Left cardiac atrium (tissue), 4 donors: ENCODE measurements at regions of chr6 and their contacts with region 1.

Region 1: DNA sequence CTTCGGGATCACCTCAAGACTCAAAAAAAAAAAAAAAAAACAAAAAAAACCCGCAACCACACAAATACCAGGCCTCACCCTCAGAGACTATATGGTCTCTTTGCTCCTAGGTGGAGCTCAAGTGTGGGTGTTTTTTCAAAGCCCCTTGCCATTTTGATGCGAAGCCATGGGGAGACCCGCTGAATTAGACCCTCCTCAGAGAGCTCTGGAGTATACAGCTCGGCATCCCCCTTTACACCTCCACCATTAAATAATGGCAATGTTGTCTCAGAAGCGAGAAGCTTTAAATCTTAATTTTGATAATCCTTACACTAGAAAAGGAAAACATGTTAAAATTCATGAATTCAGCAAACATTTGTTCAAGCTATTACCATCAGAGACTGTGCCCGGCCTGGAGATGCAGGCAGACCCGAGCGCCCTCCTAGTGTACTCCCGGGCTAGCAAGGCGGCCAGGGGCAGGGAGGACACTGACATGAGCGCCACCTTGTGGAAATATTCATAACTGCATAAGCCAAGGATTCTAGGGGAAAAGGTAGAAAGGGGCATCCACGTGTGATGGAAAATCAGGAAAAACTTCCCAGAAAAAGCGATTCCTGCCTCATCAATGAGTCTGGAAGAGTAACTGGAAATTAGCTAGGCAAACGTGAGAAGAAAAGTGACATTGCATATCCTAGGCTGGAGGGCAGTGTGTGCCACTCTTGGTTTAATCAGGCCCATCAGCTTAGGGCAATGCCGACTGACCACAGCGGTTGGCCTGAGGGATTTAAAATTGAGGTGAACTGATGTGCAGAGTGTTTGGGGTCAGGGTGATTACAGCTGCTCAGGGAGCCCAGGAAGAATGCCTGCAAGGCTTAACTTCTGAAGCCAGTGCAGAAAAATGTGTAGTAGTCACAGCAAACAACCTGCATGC is 72.5 kb downstream of the B3GAT2 start:
- DNase-seq: peak; percentile 53
- ATAC-seq: peak; percentile 85 to 87

Region 2: DNA sequence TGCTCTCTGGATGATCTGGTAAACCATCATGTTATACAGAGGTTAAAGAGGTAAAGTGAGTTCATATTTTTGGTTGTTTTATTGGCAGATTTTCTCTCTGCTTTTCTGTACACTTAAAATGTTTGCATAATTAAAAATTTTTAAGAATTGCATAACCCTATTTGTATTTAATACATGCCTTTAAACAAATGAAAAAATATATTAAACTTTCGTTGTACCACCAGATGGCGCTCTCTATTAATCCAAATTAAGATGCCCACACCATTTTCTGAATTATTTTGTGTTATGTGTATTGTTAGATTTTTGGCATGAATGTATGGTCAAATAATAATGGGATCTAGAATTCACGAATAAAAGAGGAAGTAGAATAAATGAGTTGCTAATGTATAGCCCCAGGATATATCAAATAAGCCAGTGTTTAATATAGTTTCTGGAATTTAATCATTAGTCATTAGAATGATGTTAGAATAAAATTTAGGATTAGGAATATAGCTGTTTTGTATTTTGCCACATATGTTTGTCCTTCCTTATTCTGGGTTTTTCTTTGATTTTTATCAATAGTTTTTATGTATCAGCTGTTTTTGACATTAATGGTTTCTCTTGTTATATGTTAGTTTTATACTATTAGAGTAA is 177.7 kb before region 1 on chr6:
- intact Hi-C with region 1: loop called (anchors 2 to 5 kb)
- DNase-seq: no peak
- ATAC-seq: no peak